ENCODE measurements at regions of chr17 and their contacts with region 1.

Region 1: DNA sequence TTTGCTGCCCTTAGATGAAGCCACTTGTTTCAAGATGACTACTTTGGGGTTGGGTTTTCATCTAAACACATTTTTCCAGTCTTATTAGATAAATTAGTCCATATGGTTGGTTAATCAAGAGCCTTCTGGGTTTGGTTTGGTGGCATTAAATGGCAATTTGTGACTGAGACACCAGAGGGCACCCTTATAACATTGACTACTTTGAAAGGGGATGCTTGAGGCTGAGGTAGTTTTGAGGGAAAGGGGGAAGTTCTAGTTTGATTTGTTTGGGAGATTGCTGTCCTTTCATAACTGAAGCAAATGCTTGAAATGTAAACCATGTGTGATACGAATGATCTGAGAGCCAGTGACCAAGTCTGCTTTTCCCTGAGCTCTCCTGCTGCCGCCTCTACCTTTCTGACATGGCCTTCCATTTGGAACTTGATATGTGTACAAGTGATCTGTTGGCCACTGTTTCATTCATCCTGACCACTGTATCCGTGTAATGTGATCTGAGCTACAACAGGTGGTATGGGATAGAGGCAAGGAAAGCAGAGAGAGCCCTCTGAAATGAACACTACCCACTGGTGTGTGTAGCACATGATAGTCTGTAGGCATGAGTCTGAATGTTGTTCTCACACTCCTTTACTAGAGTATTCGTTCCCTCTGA is 5.8 kb upstream of the RARA start:
- DNase-seq: peak in 3 of 4 experiments; percentile 36 to 63 (median 47)
- ATAC-seq: peak; percentile 48
- H3K4me3 ChIP-seq: no peak overlapping the region
- H3K27ac ChIP-seq: no peak overlapping the region
- H3K4me1 ChIP-seq: peaks cover 20 to 21% of the 10 kb centered on the region in 2 experiments
- H3K27me3 ChIP-seq: no peaks in the 10 kb centered on the region
- CTCF ChIP-seq: peak; percentile 63 to 81 (median 69)
- EP300 ChIP-seq: no peak
- POLR2A ChIP-seq: peak; percentile 22; the same call in 1 of the 2 replicates
- RAD21 ChIP-seq: peak; percentile 89 to 92

Region 2: DNA sequence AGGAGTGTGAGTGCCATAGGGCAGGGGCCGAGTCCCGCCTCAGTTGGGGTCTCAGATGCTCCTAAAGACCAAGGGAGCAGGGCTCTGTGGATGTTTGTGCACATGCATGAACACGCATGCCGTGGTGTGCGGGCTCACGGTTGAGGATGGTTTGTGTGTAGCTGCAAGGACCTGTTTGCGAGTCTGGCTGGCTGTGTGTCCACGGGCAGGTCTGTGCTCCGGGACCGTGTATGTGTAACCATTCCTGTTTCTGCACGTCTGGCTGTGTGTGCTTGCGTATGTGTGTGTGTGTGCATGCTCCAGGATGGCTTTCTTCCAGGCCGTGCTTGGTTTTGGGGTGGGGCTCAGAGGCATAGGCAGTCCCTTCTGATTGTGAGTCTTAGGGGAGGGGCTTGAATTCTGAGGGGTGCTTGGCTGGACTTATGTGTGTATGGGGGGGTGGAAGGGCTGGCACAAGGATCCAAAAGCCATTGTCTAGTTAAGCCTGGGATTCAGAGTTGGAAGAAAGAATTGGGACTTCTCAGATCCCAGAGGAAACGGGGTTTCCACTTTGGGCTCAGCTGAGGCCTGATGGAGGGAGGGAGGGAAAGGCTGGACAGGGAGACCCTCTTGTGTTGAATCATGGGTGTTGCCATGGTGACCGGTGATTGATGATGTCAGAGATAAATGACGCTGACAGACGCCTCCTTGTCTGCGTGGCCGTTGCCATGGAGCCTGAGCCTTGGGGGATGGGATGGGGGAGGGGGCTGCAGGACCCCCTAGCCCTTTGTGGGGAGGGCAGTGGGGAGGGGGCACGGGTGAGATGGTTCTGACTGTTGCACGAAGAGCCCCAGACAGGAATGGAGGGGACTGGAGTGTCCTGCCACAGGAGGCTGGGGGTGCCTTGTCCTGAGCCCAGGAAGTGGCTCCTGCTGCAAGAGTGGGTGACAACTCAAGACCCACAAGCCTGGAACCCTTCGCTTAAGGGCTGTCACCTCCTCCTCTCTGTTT is 47.1 kb after region 1 on chr17:
- CTCF ChIA-PET with region 1: interaction called, 90 read pairs
- POLR2A ChIA-PET with region 1: interaction called, 5 read pairs
- in situ Hi-C with region 1: loop called (anchors 5 kb)
- intact Hi-C with region 1: loop called (anchors 1 kb)
- DNase-seq: peak in 1 of 4 experiments; percentile 47
- ATAC-seq: no peak
- H3K4me3 ChIP-seq: no peak overlapping the region
- H3K27ac ChIP-seq: no peak overlapping the region
- H3K4me1 ChIP-seq: peaks cover 28 to 67% of the 10 kb centered on the region in 2 experiments
- H3K27me3 ChIP-seq: no peaks in the 10 kb centered on the region
- CTCF ChIP-seq: no peak
- EP300 ChIP-seq: no peak
- POLR2A ChIP-seq: no peak
- RAD21 ChIP-seq: no peak

Region 3: GRCh38 chr17:40355123-40355803 is 52.1 kb after region 1 on chr17:
- CTCF ChIA-PET with region 1: interaction called, 90 read pairs
- POLR2A ChIA-PET with region 1: interaction called, 5 read pairs
- in situ Hi-C with region 1: loop called (anchors 5 kb)
- intact Hi-C with region 1: loop called (anchors 1 kb)
- DNase-seq: peak; percentile 82 to 88 (median 87)
- ATAC-seq: peak; percentile 90
- H3K4me3 ChIP-seq: no peak overlapping the region
- H3K27ac ChIP-seq: no peak overlapping the region; the same call in 2 of the 3 replicates
- H3K4me1 ChIP-seq: peaks cover 0 to 58% of the 10 kb centered on the region in 2 experiments; a peak in 3 of 5 replicates
- H3K27me3 ChIP-seq: no peaks in the 10 kb centered on the region
- CTCF ChIP-seq: peak; percentile 94 to 98 (median 95)
- EP300 ChIP-seq: no peak
- POLR2A ChIP-seq: no peak
- RAD21 ChIP-seq: peak; percentile 96 to 98

Region 4: DNA sequence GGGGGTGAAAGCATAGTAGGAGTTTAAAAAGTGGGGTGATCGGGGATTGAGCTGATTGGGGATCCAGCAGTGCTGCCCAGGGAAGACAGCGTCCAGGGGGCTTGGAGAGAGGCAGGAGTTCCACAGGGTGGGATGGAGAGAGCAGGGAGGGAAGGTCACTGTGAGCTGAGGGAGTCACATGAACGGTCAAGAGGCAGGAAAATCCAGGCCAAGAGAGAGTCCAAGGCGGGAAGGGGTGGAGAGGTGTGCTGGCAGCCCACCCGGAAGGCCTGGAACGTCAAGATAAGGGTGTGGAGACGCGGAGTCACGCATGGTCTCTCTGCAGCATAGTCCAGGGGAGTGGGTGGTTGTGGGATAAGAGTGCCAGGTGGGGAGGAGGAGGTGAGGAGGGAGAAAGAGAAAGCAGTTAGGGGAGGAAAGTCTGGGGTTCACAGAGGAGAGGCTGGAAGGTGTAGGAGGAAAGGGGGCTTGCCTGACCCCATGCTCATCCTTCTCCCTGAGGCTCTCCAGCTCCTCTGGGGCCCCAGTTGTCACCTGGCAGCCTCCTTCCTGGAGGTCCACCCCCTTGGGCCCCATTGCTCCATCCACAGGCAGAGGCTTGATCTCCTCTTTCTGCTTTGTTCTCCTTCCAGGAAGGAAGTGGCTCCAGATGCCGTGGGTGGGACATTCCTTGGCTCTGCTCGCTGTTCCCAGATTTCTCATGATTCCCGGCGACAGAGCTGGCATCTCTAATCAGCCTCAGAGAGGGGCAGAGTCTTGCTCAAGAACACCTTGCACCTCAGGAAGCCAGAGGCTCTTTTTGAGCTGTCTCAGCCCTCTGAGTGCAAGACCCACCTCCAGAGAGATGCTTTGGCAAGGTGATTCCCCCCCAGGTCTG is 233.4 kb after region 1 on chr17:
- CTCF ChIA-PET with region 1: interaction called, 3 read pairs
- POLR2A ChIA-PET with region 1: interaction called, 3 read pairs
- in situ Hi-C with region 1: no loop called
- intact Hi-C with region 1: loop called (anchors 10 kb)
- DNase-seq: peak; percentile 86 to 94 (median 88)
- ATAC-seq: peak; percentile 80
- H3K4me3 ChIP-seq: no peak overlapping the region
- H3K27ac ChIP-seq: peak overlapping the region; percentile 78
- H3K4me1 ChIP-seq: peaks cover 30 to 55% of the 10 kb centered on the region in 2 experiments
- H3K27me3 ChIP-seq: no peaks in the 10 kb centered on the region
- CTCF ChIP-seq: no peak
- EP300 ChIP-seq: peak; percentile 87
- POLR2A ChIP-seq: no peak
- RAD21 ChIP-seq: no peak